Naive thymus-derived CD4-positive, alpha-beta T cell (primary cell): ENCODE measurements at regions of chr6 and their contacts with region 1.

Region 1: GRCh38 chr6:133837801-133838349 is 51.0 kb upstream of the TCF21 start:
- DNase-seq: peak; percentile 11 to 67 (median 43)
- ATAC-seq: peak; percentile 76
- H3K4me3 ChIP-seq: peak overlapping the region; percentile 21
- H3K4me3 Mint-ChIP-seq: peak overlapping the region; percentile 46 to 84 (median 70)
- H3K27ac ChIP-seq: no peak overlapping the region
- H3K27ac Mint-ChIP-seq: no peak overlapping the region
- H3K4me1 ChIP-seq: peaks cover 0 to 6% of the 10 kb centered on the region in 2 donors
- H3K4me1 Mint-ChIP-seq: peaks cover 0 to 10% (median 7%) of the 10 kb centered on the region in 7 donors
- H3K27me3 ChIP-seq: no peaks in the 10 kb centered on the region
- H3K27me3 Mint-ChIP-seq: peaks cover 10 to 48% (median 41%) of the 10 kb centered on the region in 5 donors

Region 2: GRCh38 chr6:132843316-132844043 is 994.4 kb before region 1 on chr6:
- CTCF ChIA-PET with region 1: no interaction called
- POLR2A ChIA-PET with region 1: no interaction called
- intact Hi-C with region 1: no loop called
- DNase-seq: no peak
- ATAC-seq: no peak
- H3K4me3 ChIP-seq: no peak overlapping the region
- H3K4me3 Mint-ChIP-seq: no peak overlapping the region
- H3K27ac ChIP-seq: no peak overlapping the region
- H3K27ac Mint-ChIP-seq: no peak overlapping the region
- H3K4me1 ChIP-seq: no peaks in the 10 kb centered on the region
- H3K4me1 Mint-ChIP-seq: peaks cover 0 to 2% (median 0%) of the 10 kb centered on the region in 7 donors
- H3K27me3 ChIP-seq: no peaks in the 10 kb centered on the region
- H3K27me3 Mint-ChIP-seq: peaks cover 3 to 5% (median 4%) of the 10 kb centered on the region in 5 donors

Region 3: DNA sequence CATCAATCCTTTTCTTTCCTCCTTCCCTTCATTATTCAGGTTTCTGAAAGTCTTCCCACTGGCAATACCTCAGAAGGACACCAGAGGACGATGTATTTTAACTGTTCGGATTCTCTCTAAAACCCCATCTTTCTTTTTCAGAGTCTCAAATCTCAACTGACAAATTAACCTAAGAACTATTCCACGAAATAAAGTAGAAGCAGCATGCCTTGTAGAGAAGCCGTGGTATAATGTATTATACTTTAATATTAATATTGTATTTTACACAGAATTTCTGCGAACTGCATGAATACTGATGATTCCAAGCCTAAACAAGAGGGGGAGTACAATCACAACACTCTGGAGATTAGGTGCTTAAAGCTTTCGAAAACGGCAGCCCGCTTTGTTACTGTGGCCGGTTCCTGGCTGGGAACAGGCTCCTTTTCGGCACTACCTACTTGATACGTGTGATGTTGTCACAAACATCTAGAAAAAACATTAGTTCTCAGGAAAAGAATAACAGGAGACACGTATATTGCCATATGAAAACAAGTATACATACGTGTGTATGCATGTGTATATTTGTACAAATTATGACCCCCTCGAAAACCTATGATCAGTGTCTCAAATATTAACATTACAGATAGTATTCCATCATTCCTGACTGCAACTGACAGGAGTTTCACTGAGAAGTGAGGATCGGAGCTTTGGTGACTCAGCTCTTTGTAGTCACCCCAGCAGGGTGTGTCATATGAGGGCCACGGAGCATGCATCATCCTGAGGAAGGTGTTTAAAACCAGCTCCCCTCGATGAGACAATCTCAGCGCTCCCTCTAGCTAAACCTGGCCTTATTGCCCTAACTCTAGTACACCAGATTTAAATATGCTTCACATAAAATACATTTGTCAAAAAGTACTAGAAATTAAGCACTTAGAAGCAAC is 268.6 kb before region 1 on chr6:
- CTCF ChIA-PET with region 1: no interaction called
- POLR2A ChIA-PET with region 1: no interaction called
- intact Hi-C with region 1: loop called in 1 of 2 experiments (anchors 10 kb)
- DNase-seq: no peak
- ATAC-seq: no peak
- H3K4me3 ChIP-seq: no peak overlapping the region
- H3K4me3 Mint-ChIP-seq: peak overlapping the region; percentile 47 to 77 (median 62)
- H3K27ac ChIP-seq: no peak overlapping the region
- H3K27ac Mint-ChIP-seq: no peak overlapping the region
- H3K4me1 ChIP-seq: no peaks in the 10 kb centered on the region
- H3K4me1 Mint-ChIP-seq: peaks cover 0 to 8% (median 6%) of the 10 kb centered on the region in 7 donors
- H3K27me3 ChIP-seq: no peaks in the 10 kb centered on the region
- H3K27me3 Mint-ChIP-seq: peaks cover 14 to 54% (median 47%) of the 10 kb centered on the region in 5 donors